ENCODE measurements at regions of chr14 and their contacts with region 1.

Region 1: GRCh38 chr14:21215130-21215878 is 53.9 kb downstream of the HNRNPC start:
- DNase-seq: no peak
- ATAC-seq: no peak

Region 2: DNA sequence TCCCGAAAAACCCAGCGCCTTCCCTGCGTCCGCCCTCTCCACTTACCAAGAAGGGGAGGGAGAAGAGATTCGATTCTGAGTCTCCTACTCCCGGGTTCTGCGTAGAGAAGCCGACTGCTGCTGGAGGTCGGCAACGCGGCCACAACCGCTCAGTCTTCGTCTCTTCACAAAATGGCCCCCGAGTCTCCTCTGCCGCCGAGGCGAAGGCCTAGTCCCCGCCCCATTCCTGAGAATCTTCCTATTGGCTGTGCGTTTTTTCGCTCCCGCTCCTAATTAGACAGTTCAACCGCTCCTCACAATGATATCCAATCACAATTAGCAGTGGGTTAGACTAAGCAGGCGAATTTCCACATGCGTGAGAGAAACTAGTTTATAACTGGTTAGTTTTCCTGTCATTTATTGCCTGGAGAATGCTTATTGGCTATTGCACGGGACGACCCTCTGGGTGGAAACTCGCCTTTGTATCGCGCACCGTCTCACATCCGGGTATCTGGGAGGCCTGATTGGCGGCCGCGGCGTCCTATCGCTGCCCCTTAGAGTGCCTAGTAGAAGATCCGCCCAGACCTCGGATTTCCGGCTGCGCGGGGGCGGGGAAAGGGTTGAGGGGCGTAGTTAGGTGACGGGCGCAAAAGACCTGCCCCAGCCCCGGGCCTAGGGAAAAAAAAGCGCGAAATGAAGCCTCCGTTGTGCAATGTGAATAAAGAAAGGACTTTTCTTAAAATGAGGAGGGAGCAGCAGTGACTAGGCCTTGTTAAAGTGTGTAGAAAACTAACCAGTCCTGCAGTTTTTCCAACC is 54.1 kb after region 1 on chr14 and contains the start of gene HNRNPC:
- intact Hi-C with region 1: loop called (anchors 10 kb)
- DNase-seq: peak; percentile 100
- ATAC-seq: peak; percentile 98
- total RNA-seq, gene HNRNPC: 267 TPM

Region 3: GRCh38 chr14:21807975-21808374 is 592.7 kb after region 1 on chr14:
- intact Hi-C with region 1: no loop called
- DNase-seq: no peak
- ATAC-seq: no peak